ENCODE measurements at regions of chr10 and their contacts with region 1.

Region 1: DNA sequence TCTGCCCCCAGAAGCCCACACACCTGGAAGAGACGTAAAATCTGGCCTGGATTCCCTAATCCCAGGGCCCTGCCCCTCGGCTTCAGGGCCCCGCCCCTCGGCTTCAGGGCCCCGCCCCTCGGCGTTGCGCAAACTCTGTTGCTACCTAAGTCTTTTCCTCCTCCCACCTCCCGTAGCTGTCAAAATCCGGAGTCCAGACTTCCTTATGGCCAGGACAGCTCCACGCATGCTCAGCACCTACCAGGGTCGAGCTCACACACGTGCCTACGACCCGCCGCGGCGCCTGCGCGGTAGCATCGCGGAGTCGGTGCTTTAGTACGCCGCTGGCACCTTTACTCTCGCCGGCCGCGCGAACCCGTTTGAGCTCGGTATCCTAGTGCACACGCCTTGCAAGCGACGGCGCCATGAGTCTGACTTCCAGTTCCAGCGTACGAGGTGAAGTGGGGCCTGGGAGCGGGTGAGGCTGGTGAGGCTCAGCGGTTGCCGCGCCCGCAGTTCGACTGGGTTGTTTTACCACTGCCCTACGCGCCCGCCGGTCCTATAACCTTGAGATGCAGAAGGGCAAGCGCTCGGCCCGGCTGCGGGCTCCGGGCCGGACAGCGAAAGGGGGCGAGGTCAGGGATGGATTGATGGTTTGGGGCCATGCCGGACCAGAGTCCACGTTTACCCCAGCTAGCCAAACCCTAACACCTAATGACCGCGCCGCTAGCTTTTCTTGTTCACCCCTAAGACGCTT is at the start of gene CISD1:
- DNase-seq: peak; percentile 84 to 96 (median 95)
- ATAC-seq: peak; percentile 69
- H3K4me3 ChIP-seq: peak within 1 kb of the TSS; percentile 73
- H3K4me3 Mint-ChIP-seq: peak within 1 kb of the TSS; percentile 89 to 99 (median 98)
- H3K27ac ChIP-seq: peak within 1 kb of the TSS; percentile 77
- H3K27ac Mint-ChIP-seq: peak within 1 kb of the TSS; percentile 91 to 97 (median 96)
- H3K4me1 ChIP-seq: peaks cover 18 to 20% of the 10 kb centered on the region in 2 donors
- H3K4me1 Mint-ChIP-seq: peaks cover 11 to 50% (median 40%) of the 10 kb centered on the region in 7 donors
- H3K27me3 ChIP-seq: no peaks in the 10 kb centered on the region
- H3K27me3 Mint-ChIP-seq: peaks cover 0 to 2% (median 0%) of the 10 kb centered on the region in 5 donors
- total RNA-seq, gene CISD1: 5.1 to 45.7 (median 9.2) TPM

Region 2: DNA sequence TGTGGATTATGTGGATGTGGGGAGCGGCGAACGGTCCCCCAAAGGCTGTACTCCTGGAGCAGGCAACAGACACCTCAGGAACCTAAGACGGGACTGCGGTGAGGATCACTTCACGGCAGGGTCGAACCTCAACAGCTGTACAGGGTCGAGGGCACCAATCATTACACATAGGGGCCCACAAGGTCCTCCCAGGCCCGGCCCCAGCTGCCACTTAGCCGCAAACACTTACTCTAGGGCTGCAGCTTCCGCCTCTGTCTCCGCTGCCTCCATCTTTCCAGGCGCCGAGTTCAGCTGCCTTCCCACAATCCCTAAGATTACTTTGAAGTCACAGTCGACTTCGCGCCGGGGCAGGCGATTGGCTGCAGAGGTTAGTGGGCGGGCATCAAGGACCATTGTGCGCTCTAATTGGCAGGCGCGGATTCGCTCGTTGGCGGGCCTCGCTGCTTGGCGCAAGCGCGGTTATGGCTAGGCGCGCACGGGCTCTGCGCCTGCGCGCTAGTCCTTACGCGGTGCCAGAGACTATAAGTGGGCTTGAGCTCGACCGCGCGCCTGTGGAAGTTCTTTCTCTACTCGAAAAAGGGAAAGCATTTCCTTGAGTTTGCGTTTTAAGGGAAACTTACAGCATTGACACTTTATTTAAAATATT is 1907.9 kb before region 1 on chr10 and contains the start of gene ZWINT:
- CTCF ChIA-PET with region 1: no interaction called
- POLR2A ChIA-PET with region 1: no interaction called
- intact Hi-C with region 1: loop called (anchors 1 to 10 kb)
- DNase-seq: peak; percentile 86 to 92 (median 90)
- ATAC-seq: peak; percentile 98
- H3K4me3 ChIP-seq: peak within 1 kb of the TSS; percentile 75
- H3K4me3 Mint-ChIP-seq: peak within 1 kb of the TSS; percentile 84 to 99 (median 96)
- H3K27ac ChIP-seq: peak within 1 kb of the TSS; percentile 62
- H3K27ac Mint-ChIP-seq: peak within 1 kb of the TSS; percentile 75 to 95 (median 88)
- H3K4me1 ChIP-seq: peaks cover 4 to 8% of the 10 kb centered on the region in 2 donors
- H3K4me1 Mint-ChIP-seq: peaks cover 9 to 49% (median 21%) of the 10 kb centered on the region in 7 donors
- H3K27me3 ChIP-seq: no peaks in the 10 kb centered on the region
- H3K27me3 Mint-ChIP-seq: no peaks in the 10 kb centered on the region
- total RNA-seq, gene ZWINT: 2.5 to 78.7 (median 3.5) TPM

Region 3: DNA sequence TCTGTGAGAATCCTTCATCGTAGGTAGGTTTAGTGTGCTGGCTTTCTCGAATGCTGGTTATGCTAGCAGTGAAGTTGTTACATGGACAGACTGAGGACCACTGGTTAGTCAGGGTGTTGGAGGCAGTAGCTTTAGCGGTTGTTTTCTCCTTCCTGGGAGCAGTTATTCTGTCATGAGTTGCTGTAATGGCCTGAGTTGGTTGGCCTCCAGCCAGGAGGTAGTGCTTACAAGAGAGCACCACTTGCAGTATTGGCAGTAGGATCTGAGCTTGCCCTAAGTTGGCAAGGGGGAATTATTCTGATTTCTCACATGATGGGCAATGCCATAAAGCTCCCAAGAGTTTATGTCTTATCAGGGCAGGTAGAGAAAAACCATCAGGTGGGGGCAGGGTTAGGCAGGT is 59.4 kb before region 1 on chr10:
- CTCF ChIA-PET with region 1: no interaction called
- POLR2A ChIA-PET with region 1: no interaction called
- intact Hi-C with region 1: loop called in 1 of 2 experiments (anchors 5 kb)
- DNase-seq: no peak
- ATAC-seq: no peak
- H3K4me3 ChIP-seq: no peak overlapping the region
- H3K4me3 Mint-ChIP-seq: no peak overlapping the region
- H3K27ac ChIP-seq: no peak overlapping the region
- H3K27ac Mint-ChIP-seq: no peak overlapping the region
- H3K4me1 ChIP-seq: no peaks in the 10 kb centered on the region
- H3K4me1 Mint-ChIP-seq: peaks cover 2 to 41% (median 14%) of the 10 kb centered on the region in 7 donors
- H3K27me3 ChIP-seq: no peaks in the 10 kb centered on the region
- H3K27me3 Mint-ChIP-seq: no peaks in the 10 kb centered on the region

Region 4: DNA sequence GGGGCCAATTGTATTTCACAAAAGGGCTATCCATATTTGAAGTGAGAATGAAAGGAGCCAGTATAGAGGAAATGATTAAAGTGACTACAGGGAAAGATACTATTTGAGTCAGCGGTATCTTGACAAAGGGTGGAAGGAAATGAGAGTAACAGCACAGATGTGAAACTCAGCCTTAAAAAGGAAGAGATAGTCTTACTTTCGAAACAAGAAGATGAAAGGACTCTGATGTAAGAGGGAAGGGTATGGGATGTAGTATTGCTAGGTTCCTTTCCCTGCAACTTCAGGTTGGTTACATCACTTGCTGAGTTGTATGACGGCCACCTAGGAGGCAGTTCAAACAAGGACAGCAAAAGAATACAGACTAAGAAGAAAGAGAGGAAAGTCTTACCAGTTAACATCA is 13.6 kb after region 1 on chr10:
- CTCF ChIA-PET with region 1: no interaction called
- POLR2A ChIA-PET with region 1: interaction called, 5 read pairs
- intact Hi-C with region 1: loop called (anchors 1 kb)
- DNase-seq: peak in 5 of 9 donors; percentile 17 to 63 (median 40)
- ATAC-seq: peak; percentile 81
- H3K4me3 ChIP-seq: no peak overlapping the region
- H3K4me3 Mint-ChIP-seq: peak overlapping the region in 6 of 10 donors; percentile 1 to 77 (median 24)
- H3K27ac ChIP-seq: peak overlapping the region; percentile 30
- H3K27ac Mint-ChIP-seq: peak overlapping the region; percentile 48 to 91 (median 76)
- H3K4me1 ChIP-seq: no peaks in the 10 kb centered on the region
- H3K4me1 Mint-ChIP-seq: peaks cover 10 to 34% (median 15%) of the 10 kb centered on the region in 7 donors
- H3K27me3 ChIP-seq: no peaks in the 10 kb centered on the region
- H3K27me3 Mint-ChIP-seq: no peaks in the 10 kb centered on the region

Region 5: GRCh38 chr10:58334817-58335305 is 65.8 kb after region 1 on chr10 and contains the start of gene UBE2D1:
- CTCF ChIA-PET with region 1: no interaction called
- POLR2A ChIA-PET with region 1: no interaction called
- intact Hi-C with region 1: loop called (anchors 1 kb)
- DNase-seq: peak; percentile 60 to 84 (median 74)
- ATAC-seq: peak; percentile 98
- H3K4me3 ChIP-seq: peak within 1 kb of the TSS; percentile 71
- H3K4me3 Mint-ChIP-seq: peak within 1 kb of the TSS; percentile 88 to 98 (median 96)
- H3K27ac ChIP-seq: peak within 1 kb of the TSS; percentile 78
- H3K27ac Mint-ChIP-seq: peak within 1 kb of the TSS; percentile 77 to 96 (median 87)
- H3K4me1 ChIP-seq: peaks cover 0 to 15% of the 10 kb centered on the region in 2 donors
- H3K4me1 Mint-ChIP-seq: peaks cover 25 to 44% (median 38%) of the 10 kb centered on the region in 7 donors
- H3K27me3 ChIP-seq: no peaks in the 10 kb centered on the region
- H3K27me3 Mint-ChIP-seq: peaks cover 0 to 7% (median 4%) of the 10 kb centered on the region in 5 donors
- total RNA-seq, gene UBE2D1: 11.3 to 23.8 (median 12.8) TPM